ENCODE measurements at regions of chr5 and their contacts with region 1.

Region 1: DNA sequence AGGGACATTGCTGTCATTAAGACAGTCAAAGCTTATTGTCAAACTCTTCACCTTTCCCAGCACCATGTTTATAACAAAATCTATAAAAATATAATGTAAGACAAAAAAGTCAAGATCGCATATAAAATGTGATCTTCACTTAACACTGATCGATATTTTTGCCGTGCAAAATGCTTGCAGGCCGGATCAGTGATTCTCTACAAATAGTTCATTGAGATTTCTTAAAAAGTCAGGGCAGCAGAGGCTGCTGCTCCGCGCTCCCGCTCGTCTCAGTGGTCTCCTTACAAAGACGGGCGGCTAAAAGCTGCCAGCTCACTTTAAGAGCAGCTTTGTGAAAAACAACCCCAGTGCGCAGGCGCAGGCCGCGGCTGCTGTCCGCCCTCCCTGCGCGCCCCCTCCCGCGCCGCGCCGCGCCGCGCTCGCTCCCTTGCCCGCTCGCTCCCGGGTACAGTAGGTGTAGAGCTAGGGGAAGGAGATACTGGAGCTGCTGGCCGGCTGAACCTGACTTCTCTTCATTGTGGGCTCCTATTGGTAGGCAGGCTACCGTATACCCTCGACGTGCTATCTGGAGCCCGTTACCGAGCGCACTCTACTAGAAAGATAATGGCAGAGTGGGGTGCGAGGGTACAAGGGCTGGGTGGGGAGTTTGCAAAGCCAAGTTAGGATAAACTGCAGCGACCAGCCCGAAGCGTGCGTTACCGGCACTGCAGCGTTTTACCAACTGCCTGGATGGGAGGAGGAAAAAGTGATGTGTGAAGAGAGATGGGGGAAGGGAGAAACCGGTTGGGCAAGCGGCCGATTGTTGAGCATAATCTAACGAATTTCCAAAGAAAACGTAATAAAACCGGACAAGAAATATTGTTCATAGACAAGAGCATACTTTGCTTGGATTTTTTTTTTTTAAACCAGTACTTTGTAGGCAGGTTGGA is at the start of gene ARRDC3:
- DNase-seq: peak; percentile 97
- ATAC-seq: peak; percentile 49
- H3K4me3 ChIP-seq: peak within 1 kb of the TSS; percentile 76 to 98 (median 98)
- H3K4me3 Mint-ChIP-seq: peak within 1 kb of the TSS; percentile 88
- H3K27ac ChIP-seq: peak within 1 kb of the TSS; percentile 99 to 100
- H3K27ac Mint-ChIP-seq: peak within 1 kb of the TSS; percentile 99
- H3K4me1 ChIP-seq: peaks cover 15 to 17% of the 10 kb centered on the region in 2 donors
- H3K4me1 Mint-ChIP-seq: peaks cover 25% of the 10 kb centered on the region
- H3K27me3 ChIP-seq: no peaks in the 10 kb centered on the region
- H3K27me3 Mint-ChIP-seq: no peaks in the 10 kb centered on the region
- CTCF ChIP-seq: no peak
- total RNA-seq, gene ARRDC3: 84.9 and 95.4 TPM in 2 replicates

Region 2: GRCh38 chr5:90529194-90529938 is 853.9 kb before region 1 on chr5 and contains the start of gene LYSMD3:
- CTCF ChIA-PET with region 1: no interaction called
- POLR2A ChIA-PET with region 1: interaction called, 5 read pairs
- intact Hi-C with region 1: loop called (anchors 2 kb)
- DNase-seq: peak; percentile 97
- ATAC-seq: peak; percentile 94
- H3K4me3 ChIP-seq: peak within 1 kb of the TSS; percentile 78 to 97 (median 83)
- H3K4me3 Mint-ChIP-seq: peak within 1 kb of the TSS; percentile 99
- H3K27ac ChIP-seq: peak within 1 kb of the TSS; percentile 88 to 94
- H3K27ac Mint-ChIP-seq: peak within 1 kb of the TSS; percentile 99
- H3K4me1 ChIP-seq: peaks cover 15 to 24% of the 10 kb centered on the region in 2 donors
- H3K4me1 Mint-ChIP-seq: peaks cover 36% of the 10 kb centered on the region
- H3K27me3 ChIP-seq: peaks cover 0 to 22% (median 15%) of the 10 kb centered on the region in 4 experiments
- H3K27me3 Mint-ChIP-seq: peaks cover 24% of the 10 kb centered on the region
- CTCF ChIP-seq: no peak
- total RNA-seq, gene LYSMD3: 23.7 and 25.2 TPM in 2 replicates

Region 3: GRCh38 chr5:91101600-91102379 is 281.5 kb before region 1 on chr5:
- CTCF ChIA-PET with region 1: interaction called, 49 read pairs
- POLR2A ChIA-PET with region 1: no interaction called
- intact Hi-C with region 1: loop called (anchors 1 kb)
- DNase-seq: peak; percentile 65
- ATAC-seq: peak; percentile 84
- H3K4me3 ChIP-seq: no peak overlapping the region
- H3K4me3 Mint-ChIP-seq: no peak overlapping the region
- H3K27ac ChIP-seq: no peak overlapping the region
- H3K27ac Mint-ChIP-seq: no peak overlapping the region
- H3K4me1 ChIP-seq: no peaks in the 10 kb centered on the region
- H3K4me1 Mint-ChIP-seq: no peaks in the 10 kb centered on the region
- H3K27me3 ChIP-seq: no peaks in the 10 kb centered on the region
- H3K27me3 Mint-ChIP-seq: peaks cover 4% of the 10 kb centered on the region
- CTCF ChIP-seq: peak; percentile 67

Region 4: GRCh38 chr5:91214561-91214960 is 168.7 kb before region 1 on chr5:
- CTCF ChIA-PET with region 1: interaction called, 195 read pairs
- POLR2A ChIA-PET with region 1: no interaction called
- intact Hi-C with region 1: no loop called
- DNase-seq: no peak
- ATAC-seq: no peak
- H3K4me3 ChIP-seq: no peak overlapping the region
- H3K4me3 Mint-ChIP-seq: no peak overlapping the region
- H3K27ac ChIP-seq: no peak overlapping the region
- H3K27ac Mint-ChIP-seq: no peak overlapping the region
- H3K4me1 ChIP-seq: no peaks in the 10 kb centered on the region
- H3K4me1 Mint-ChIP-seq: no peaks in the 10 kb centered on the region
- H3K27me3 ChIP-seq: no peaks in the 10 kb centered on the region
- H3K27me3 Mint-ChIP-seq: peaks cover 25% of the 10 kb centered on the region
- CTCF ChIP-seq: no peak

Region 5: DNA sequence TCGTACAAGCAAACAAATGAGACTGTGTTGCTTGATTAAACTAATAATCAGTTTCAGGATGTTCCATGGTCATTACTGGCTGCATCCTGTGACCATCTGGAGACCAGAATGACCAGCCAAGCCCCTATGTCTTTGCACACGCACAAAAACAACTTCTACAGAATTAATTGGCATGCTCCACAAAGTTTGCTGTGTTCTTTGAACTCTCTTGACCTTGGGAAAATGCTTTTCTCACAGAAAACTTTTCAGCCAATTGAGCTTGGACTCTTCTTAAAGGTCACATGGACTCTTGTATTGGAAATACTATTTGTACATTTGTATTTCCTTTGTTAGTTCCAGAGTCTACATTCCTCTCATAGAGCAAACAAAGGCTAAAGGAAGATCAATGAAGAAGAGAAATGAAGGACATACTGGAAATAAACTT is 148.0 kb before region 1 on chr5:
- CTCF ChIA-PET with region 1: interaction called, 21 read pairs
- POLR2A ChIA-PET with region 1: interaction called, 3 read pairs
- intact Hi-C with region 1: no loop called
- DNase-seq: no peak
- ATAC-seq: no peak
- H3K4me3 ChIP-seq: no peak overlapping the region
- H3K4me3 Mint-ChIP-seq: no peak overlapping the region
- H3K27ac ChIP-seq: no peak overlapping the region
- H3K27ac Mint-ChIP-seq: no peak overlapping the region
- H3K4me1 ChIP-seq: no peaks in the 10 kb centered on the region
- H3K4me1 Mint-ChIP-seq: no peaks in the 10 kb centered on the region
- H3K27me3 ChIP-seq: no peaks in the 10 kb centered on the region
- H3K27me3 Mint-ChIP-seq: peaks cover 6% of the 10 kb centered on the region
- CTCF ChIP-seq: no peak

Region 6: DNA sequence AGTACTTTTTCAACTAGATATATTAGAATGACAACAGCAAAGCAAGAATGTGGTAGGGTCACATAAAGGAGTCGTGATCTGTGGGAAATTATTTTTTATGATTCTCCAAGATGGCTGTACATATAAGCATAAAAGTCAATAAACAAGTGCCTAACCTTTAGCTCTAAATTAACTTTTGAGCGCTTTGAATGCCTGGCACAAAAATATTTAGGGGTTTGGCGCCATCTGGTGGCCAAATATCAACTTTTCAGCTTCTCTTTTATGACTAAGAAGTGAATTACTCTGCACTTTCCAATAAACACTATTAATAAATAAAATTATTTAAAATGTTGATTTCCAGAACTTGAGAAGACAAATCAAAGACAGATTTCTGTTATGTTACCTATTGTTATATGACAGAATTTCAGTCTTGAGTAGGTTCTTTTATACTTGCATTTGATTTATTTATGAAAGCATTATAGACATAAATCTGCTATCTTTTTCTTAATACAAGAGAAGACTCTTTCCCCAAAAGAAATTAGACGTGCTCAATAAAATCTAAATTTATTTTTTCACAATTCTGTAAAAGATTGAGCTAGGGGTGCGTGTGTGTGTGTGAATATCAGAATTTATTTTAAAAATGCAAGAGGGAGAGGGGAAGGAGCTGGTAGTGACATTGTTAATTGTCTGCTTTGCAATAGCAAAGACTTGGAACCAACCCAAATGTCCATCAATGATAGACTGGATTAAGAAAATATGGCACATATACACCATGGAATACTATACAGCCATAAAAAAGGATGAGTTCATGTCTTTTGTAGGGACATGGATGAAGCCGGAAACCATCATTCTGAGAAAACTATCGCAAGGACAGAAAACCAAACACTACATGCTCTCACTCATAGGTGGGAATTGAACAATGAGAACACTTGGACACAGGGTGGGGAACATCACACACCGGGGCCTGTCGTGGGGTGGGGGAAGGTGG is 36.6 kb after region 1 on chr5:
- CTCF ChIA-PET with region 1: interaction called, 90 read pairs
- POLR2A ChIA-PET with region 1: no interaction called
- intact Hi-C with region 1: loop called (anchors 2 kb)
- DNase-seq: peak; percentile 72
- ATAC-seq: no peak
- H3K4me3 ChIP-seq: no peak overlapping the region
- H3K4me3 Mint-ChIP-seq: no peak overlapping the region
- H3K27ac ChIP-seq: no peak overlapping the region
- H3K27ac Mint-ChIP-seq: no peak overlapping the region
- H3K4me1 ChIP-seq: no peaks in the 10 kb centered on the region
- H3K4me1 Mint-ChIP-seq: no peaks in the 10 kb centered on the region
- H3K27me3 ChIP-seq: no peaks in the 10 kb centered on the region
- H3K27me3 Mint-ChIP-seq: no peaks in the 10 kb centered on the region
- CTCF ChIP-seq: peak; percentile 89

Region 7: DNA sequence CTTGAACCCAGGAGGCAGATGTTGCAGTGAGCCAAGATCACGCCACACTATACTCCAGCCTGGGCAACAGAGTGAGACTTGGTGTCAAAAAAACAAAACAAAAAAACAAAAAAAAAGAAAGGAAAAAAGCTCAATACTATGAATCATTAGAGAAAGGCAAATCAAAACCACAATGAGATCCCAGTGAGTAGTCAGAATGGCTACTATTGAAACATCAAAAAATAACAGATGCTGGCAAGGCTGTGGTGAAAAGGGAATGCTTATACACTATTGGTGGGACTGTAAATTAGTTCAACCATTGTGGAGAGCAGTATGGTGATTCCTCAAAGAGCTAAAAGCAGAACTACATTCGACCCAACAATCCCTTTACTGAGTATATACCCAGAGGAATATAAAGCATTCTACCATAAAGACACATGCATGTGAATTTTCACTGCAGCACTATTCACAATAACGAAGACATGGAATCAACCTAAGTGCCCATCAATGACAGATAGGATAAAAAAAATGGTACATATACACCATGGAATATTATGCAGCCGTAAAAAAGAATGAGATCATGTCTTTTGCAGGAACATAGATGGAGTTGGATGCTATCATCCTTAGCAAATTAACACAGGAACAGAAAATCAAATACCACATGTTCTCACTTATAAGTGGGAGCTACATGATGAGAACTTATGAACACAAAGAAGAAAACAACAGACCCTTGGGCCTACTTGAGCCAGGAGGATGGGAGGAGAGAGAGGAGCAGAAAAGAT is 81.8 kb after region 1 on chr5:
- CTCF ChIA-PET with region 1: no interaction called
- POLR2A ChIA-PET with region 1: no interaction called
- intact Hi-C with region 1: no loop called
- DNase-seq: no peak
- ATAC-seq: no peak
- H3K4me3 ChIP-seq: no peak overlapping the region
- H3K4me3 Mint-ChIP-seq: no peak overlapping the region
- H3K27ac ChIP-seq: no peak overlapping the region
- H3K27ac Mint-ChIP-seq: no peak overlapping the region
- H3K4me1 ChIP-seq: no peaks in the 10 kb centered on the region
- H3K4me1 Mint-ChIP-seq: no peaks in the 10 kb centered on the region
- H3K27me3 ChIP-seq: no peaks in the 10 kb centered on the region
- H3K27me3 Mint-ChIP-seq: peaks cover 9% of the 10 kb centered on the region
- CTCF ChIP-seq: no peak